ENCODE measurements at regions of chr3 and their contacts with region 1.

Region 1: DNA sequence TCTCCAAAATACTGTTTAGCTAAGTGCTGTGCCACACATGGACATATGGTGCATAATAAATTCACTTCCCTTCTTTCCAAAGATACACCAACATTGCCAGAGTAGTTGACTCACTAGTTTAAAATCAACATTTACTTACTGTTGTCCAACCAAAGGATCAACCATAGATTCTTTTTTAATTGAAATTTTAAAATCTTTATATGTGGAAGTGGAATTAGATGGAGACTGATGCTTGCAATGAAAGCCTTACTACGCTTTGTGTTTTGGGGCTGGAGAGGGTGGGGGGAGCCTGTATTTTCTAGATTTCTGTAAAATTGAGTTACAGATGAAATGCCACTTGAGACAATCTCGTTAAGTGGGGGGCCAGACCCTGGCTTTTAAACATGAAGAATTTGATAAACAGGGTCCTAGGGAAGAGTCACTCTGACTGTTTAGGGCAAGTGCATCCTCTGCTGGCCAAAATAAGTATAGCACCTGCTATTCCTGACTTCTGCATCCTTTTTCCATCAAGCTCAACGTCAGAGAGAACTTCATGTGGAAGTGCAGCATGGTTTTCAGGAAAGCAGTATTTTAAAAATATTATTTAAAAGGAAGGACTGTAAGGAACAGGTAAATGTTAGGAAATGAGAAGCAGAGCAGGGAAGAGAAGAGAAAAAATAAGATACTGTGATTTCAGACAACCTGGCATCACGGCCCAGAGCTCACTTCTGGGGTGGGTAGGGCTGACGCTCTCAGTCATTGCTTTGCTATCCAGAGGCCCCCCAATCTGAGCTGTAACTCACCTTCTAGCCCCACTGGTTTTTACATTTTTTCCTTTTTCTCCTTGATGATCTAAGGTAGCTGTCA is 76.7 kb downstream of the BOC start:
- DNase-seq: peak in 4 of 5 donors; percentile 25 to 49 (median 36)
- H3K4me3 ChIP-seq: no peak overlapping the region
- H3K4me3 Mint-ChIP-seq: no peak overlapping the region
- H3K27ac ChIP-seq: no peak overlapping the region
- H3K27ac Mint-ChIP-seq: no peak overlapping the region
- H3K4me1 ChIP-seq: no peaks in the 10 kb centered on the region
- H3K4me1 Mint-ChIP-seq: no peaks in the 10 kb centered on the region
- H3K27me3 ChIP-seq: no peaks in the 10 kb centered on the region
- H3K27me3 Mint-ChIP-seq: no peaks in the 10 kb centered on the region

Region 2: DNA sequence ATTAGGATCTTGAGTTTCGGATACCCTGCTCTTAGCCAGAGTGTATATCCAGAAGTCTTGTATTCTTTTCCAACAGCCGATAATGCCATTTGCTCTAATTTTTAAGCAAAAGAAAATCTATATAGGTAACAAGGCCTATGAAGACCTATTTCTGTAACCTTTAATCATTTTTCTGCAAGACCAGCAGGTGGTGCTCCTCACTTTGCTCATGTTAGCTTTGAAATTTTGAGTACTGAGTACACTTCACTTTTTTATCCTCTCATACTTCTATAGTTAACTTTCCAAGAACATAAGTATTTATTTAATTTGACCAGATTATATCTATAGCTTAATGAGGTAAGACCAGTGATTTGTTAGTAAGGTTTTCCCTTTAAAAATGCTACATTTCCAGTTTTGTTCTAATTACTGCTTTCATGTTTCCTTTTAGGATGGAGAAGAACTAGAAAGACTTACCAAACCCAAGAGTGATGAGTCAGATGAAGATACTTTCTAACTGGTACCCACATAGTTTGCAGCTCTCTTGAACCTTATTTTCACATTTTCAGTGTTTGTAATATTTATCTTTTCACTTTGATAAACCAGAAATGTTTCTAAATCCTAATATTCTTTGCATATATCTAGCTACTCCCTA is 705.7 kb before region 1 on chr3:
- CTCF ChIA-PET with region 1: interaction called, 10 read pairs
- POLR2A ChIA-PET with region 1: no interaction called
- intact Hi-C with region 1: loop called (anchors 1 kb)
- DNase-seq: peak in 4 of 5 donors; percentile 19 to 27 (median 24)
- H3K4me3 ChIP-seq: no peak overlapping the region
- H3K4me3 Mint-ChIP-seq: no peak overlapping the region
- H3K27ac ChIP-seq: no peak overlapping the region
- H3K27ac Mint-ChIP-seq: peak overlapping the region in 3 of 7 donors; percentile 17 to 47 (median 36)
- H3K4me1 ChIP-seq: no peaks in the 10 kb centered on the region
- H3K4me1 Mint-ChIP-seq: peaks cover under 1 to 2% (median 2%) of the 10 kb centered on the region in 4 donors
- H3K27me3 ChIP-seq: no peaks in the 10 kb centered on the region
- H3K27me3 Mint-ChIP-seq: no peaks in the 10 kb centered on the region

Region 3: DNA sequence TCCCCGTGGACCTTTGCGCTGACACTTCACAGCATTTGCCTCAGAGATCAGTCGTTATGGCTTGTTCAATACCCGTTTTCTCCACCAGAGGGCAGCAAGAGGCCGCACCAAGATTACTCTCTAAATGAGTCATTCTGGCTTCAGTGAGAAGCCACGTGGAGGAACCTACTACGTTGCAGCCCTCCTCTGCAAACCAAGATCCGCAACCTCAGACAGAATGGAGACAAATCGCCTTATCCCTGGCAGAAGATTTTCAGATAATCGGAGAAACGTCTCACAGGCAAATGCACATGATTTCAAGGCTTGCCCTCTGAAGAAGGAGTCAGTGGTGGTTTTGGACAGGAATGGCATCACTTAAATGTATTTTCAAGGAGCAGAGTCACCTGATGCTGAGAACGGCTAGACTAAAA is 236.7 kb before region 1 on chr3:
- CTCF ChIA-PET with region 1: interaction called, 39 read pairs
- POLR2A ChIA-PET with region 1: no interaction called
- intact Hi-C with region 1: loop called (anchors 1 kb)
- DNase-seq: peak; percentile 77 to 84 (median 80)
- H3K4me3 ChIP-seq: no peak overlapping the region
- H3K4me3 Mint-ChIP-seq: no peak overlapping the region
- H3K27ac ChIP-seq: no peak overlapping the region
- H3K27ac Mint-ChIP-seq: no peak overlapping the region
- H3K4me1 ChIP-seq: peaks cover 8% of the 10 kb centered on the region
- H3K4me1 Mint-ChIP-seq: peaks cover 0 to 9% (median 2%) of the 10 kb centered on the region in 4 donors
- H3K27me3 ChIP-seq: no peaks in the 10 kb centered on the region
- H3K27me3 Mint-ChIP-seq: no peaks in the 10 kb centered on the region

Region 4: GRCh38 chr3:113275929-113276750 is 11.9 kb before region 1 on chr3:
- CTCF ChIA-PET with region 1: interaction called, 29 read pairs
- POLR2A ChIA-PET with region 1: no interaction called
- intact Hi-C with region 1: no loop called
- DNase-seq: no peak
- H3K4me3 ChIP-seq: no peak overlapping the region
- H3K4me3 Mint-ChIP-seq: peak overlapping the region in 2 of 8 donors; percentile 48 to 51
- H3K27ac ChIP-seq: no peak overlapping the region
- H3K27ac Mint-ChIP-seq: peak overlapping the region in 1 of 7 donors; percentile 42
- H3K4me1 ChIP-seq: no peaks in the 10 kb centered on the region
- H3K4me1 Mint-ChIP-seq: peaks cover 0 to 12% (median 6%) of the 10 kb centered on the region in 4 donors
- H3K27me3 ChIP-seq: no peaks in the 10 kb centered on the region
- H3K27me3 Mint-ChIP-seq: peaks cover 0 to 5% of the 10 kb centered on the region in 2 donors

Region 5: DNA sequence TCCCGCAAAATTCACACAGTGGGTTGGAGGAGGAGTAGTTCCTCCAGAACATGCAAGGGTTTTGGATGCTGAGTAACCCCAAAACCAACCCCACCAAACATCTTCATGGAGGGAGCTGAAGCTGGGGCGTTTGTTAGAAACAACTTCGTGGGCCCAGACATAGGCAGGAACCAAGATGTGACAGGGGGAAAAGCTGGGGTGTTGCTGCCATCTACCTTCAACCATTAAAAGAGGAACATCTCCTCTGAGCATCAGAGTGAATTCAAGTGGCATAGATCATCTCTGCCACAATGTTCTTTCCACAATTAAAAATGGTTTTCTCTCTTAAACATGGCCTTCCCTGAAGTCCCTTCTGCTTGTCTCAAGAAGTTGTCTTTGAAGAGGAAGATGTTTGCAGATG is 264.8 kb after region 1 on chr3:
- CTCF ChIA-PET with region 1: no interaction called
- POLR2A ChIA-PET with region 1: no interaction called
- intact Hi-C with region 1: loop called (anchors 10 kb)
- DNase-seq: peak; percentile 19 to 40 (median 27)
- H3K4me3 ChIP-seq: no peak overlapping the region
- H3K4me3 Mint-ChIP-seq: no peak overlapping the region
- H3K27ac ChIP-seq: no peak overlapping the region
- H3K27ac Mint-ChIP-seq: peak overlapping the region in 3 of 7 donors; percentile 2 to 77 (median 25)
- H3K4me1 ChIP-seq: peaks cover 15% of the 10 kb centered on the region
- H3K4me1 Mint-ChIP-seq: peaks cover 31 to 63% (median 38%) of the 10 kb centered on the region in 4 donors
- H3K27me3 ChIP-seq: no peaks in the 10 kb centered on the region
- H3K27me3 Mint-ChIP-seq: no peaks in the 10 kb centered on the region

Measured in CD4-positive, alpha-beta memory T cell (primary cell).